ENCODE measurements at regions of chr5 and their contacts with region 1.

Region 1: GRCh38 chr5:82986404-82986803 is 90.8 kb downstream of the TMEM167A start:
- DNase-seq: no peak

Region 2: DNA sequence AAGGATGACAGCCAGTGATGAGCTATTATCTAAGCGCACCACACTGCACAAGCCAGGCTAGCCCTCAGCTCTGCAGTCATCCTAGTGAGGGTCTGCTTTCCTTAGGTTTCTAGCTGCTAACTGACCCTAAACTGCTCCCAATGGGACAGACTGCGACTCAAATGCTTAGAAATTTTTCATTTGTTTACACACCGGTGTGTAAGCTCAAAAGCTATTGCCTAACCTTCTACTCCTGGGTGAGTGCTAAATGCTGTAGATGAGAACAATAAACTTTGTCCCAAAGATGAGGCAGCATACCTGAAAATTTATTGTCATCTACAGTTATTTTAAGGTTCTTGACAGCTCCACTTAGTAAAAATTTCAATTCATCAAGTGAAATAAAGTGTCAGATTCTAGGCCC is 220.6 kb before region 1 on chr5:
- CTCF ChIA-PET with region 1: interaction called, 10 read pairs
- POLR2A ChIA-PET with region 1: no interaction called
- DNase-seq: no peak